OCI-LY7 (cell line): ENCODE measurements at regions of chr6 and their contacts with region 1.

Region 1: GRCh38 chr6:131923356-131923755 is 27.8 kb downstream of the CCN2 start:
- DNase-seq: peak; percentile 84
- H3K4me3 ChIP-seq: no peak overlapping the region
- H3K27ac ChIP-seq: no peak overlapping the region
- H3K4me1 ChIP-seq: peaks cover 7% of the 10 kb centered on the region
- CTCF ChIP-seq: peak; percentile 95

Region 2: DNA sequence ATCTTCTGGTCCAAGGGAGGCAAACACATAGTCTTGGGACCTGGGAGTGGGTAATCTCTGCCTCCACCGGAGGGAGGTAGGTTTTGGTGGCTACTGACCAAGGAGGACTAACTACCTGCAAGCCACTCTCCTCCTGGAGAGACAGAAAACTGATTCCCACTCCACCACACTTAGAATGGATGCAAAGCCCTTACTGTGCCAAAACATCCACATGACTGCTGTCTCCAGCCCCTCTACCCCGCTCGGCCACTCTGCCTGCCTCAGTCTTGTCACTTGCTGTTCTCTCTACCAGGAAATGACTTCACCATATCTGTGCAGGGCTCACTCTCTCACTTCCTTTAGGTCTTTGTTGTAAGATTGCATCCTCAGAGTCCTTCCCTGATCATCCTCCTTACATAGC is 479.8 kb before region 1 on chr6:
- CTCF ChIA-PET with region 1: no interaction called
- POLR2A ChIA-PET with region 1: no interaction called
- intact Hi-C with region 1: no loop called
- DNase-seq: peak; percentile 60
- H3K4me3 ChIP-seq: peak overlapping the region; percentile 42
- H3K27ac ChIP-seq: no peak overlapping the region
- H3K4me1 ChIP-seq: peaks cover 32% of the 10 kb centered on the region
- CTCF ChIP-seq: no peak

Region 3: DNA sequence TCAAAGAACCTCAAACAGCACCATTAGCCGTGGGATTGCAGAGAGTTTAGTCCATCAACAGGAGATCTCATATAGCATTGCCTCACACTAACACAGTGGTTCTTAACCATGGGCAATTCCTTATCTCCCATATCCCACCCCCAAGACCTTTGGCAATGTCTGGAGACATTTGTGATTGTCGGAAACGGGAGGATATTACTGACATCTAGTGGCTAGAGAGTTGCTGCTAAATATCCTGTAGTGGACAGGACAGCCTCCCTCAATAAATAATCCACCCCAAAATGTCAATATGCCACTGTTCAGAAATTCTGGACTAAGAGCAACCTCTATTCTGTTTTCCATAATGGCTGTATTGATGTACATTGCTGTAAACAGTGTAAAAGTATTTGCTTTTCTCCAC is 237.9 kb after region 1 on chr6:
- CTCF ChIA-PET with region 1: no interaction called
- POLR2A ChIA-PET with region 1: no interaction called
- intact Hi-C with region 1: loop called (anchors 2 kb)
- DNase-seq: no peak
- H3K4me3 ChIP-seq: no peak overlapping the region
- H3K27ac ChIP-seq: no peak overlapping the region
- H3K4me1 ChIP-seq: no peaks in the 10 kb centered on the region
- CTCF ChIP-seq: peak; percentile 73

Region 4: DNA sequence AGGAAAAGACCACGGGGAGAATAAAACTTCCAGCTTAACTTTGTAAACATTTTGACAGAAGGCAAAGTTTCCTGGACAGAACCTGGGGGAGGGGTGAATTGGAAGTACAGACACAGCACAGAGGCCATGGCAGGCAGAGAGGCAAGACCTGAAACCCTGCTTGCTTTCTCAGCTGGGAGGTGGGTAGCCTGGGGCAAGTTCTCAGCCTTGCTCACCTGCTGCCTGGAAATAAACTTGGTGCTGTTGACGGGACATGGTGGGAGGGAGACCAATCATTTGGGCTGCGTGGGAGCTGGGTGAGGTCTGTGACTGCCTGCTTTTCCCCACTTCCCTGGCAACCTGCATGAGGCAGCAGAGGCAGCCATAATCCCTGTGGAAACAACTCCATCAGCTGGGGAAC is 256.6 kb after region 1 on chr6:
- CTCF ChIA-PET with region 1: no interaction called
- POLR2A ChIA-PET with region 1: no interaction called
- intact Hi-C with region 1: no loop called
- DNase-seq: no peak
- H3K4me3 ChIP-seq: no peak overlapping the region
- H3K27ac ChIP-seq: no peak overlapping the region
- H3K4me1 ChIP-seq: no peaks in the 10 kb centered on the region
- CTCF ChIP-seq: no peak

Region 5: GRCh38 chr6:132218059-132218696 is 294.8 kb after region 1 on chr6:
- CTCF ChIA-PET with region 1: no interaction called
- POLR2A ChIA-PET with region 1: no interaction called
- intact Hi-C with region 1: loop called (anchors 1 kb)
- DNase-seq: peak; percentile 33
- H3K4me3 ChIP-seq: no peak overlapping the region
- H3K27ac ChIP-seq: no peak overlapping the region
- H3K4me1 ChIP-seq: no peaks in the 10 kb centered on the region
- CTCF ChIP-seq: peak; percentile 84

Region 6: GRCh38 chr6:132259070-132259469 is 335.7 kb after region 1 on chr6:
- CTCF ChIA-PET with region 1: interaction called, 3 read pairs
- POLR2A ChIA-PET with region 1: interaction called, 5 read pairs
- intact Hi-C with region 1: loop called (anchors 2 kb)
- DNase-seq: peak; percentile 45
- H3K4me3 ChIP-seq: no peak overlapping the region
- H3K27ac ChIP-seq: no peak overlapping the region
- H3K4me1 ChIP-seq: peaks cover 7% of the 10 kb centered on the region
- CTCF ChIP-seq: peak; percentile 76

Region 7: DNA sequence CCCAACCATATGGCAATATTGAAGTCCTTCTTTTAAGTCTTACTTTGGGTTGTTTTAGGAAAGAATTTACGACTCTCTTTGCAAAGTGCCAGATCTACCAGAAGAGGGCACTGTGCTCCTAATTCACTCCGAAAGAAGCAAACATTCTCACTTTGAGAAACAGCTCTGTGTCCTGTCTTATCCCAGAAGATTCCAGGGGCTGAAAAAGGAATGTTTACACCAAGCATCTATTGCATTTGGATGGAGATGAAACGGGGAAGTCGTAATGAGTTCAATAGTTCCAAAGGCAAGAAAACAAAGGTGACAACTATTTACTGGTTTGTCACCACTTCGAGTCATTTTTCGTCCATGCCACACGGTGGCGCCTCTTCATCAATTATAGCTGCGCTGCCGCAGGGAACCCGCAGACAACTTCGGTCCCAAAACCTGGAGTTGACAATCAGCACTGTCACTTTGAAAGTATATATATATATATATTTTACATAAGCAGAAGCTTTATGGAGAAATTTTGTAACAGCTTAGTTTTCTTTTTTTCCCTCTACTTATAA is 356.3 kb after region 1 on chr6:
- CTCF ChIA-PET with region 1: interaction called, 8 read pairs
- POLR2A ChIA-PET with region 1: interaction called, 3 read pairs
- intact Hi-C with region 1: loop called (anchors 5 kb)
- DNase-seq: peak; percentile 88
- H3K4me3 ChIP-seq: peak overlapping the region; percentile 63
- H3K27ac ChIP-seq: peak overlapping the region; percentile 22
- H3K4me1 ChIP-seq: peaks cover 20% of the 10 kb centered on the region
- CTCF ChIP-seq: peak; percentile 100